ENCODE measurements at regions of chr15 and their contacts with region 1.

Region 1: GRCh38 chr15:100635406-100636071 is 33.1 kb downstream of the ASB7 start:
- DNase-seq: no peak
- ATAC-seq: no peak
- H3K4me3 ChIP-seq: no peak overlapping the region
- H3K27ac ChIP-seq: no peak overlapping the region
- H3K4me1 ChIP-seq: no peaks in the 10 kb centered on the region
- H3K27me3 ChIP-seq: no peaks in the 10 kb centered on the region
- CTCF ChIP-seq: no peak
- POLR2A ChIP-seq: no peak

Region 2: GRCh38 chr15:101000271-101000681 is 364.7 kb after region 1 on chr15:
- intact Hi-C with region 1: loop called (anchors 5 kb)
- DNase-seq: no peak
- ATAC-seq: no peak
- H3K4me3 ChIP-seq: no peak overlapping the region
- H3K27ac ChIP-seq: no peak overlapping the region
- H3K4me1 ChIP-seq: no peaks in the 10 kb centered on the region
- H3K27me3 ChIP-seq: no peaks in the 10 kb centered on the region
- CTCF ChIP-seq: no peak
- POLR2A ChIP-seq: no peak

Region 3: GRCh38 chr15:101407439-101407838 is 771.9 kb after region 1 on chr15:
- intact Hi-C with region 1: no loop called
- DNase-seq: no peak
- ATAC-seq: no peak
- H3K4me3 ChIP-seq: no peak overlapping the region
- H3K27ac ChIP-seq: no peak overlapping the region
- H3K4me1 ChIP-seq: no peaks in the 10 kb centered on the region
- H3K27me3 ChIP-seq: no peaks in the 10 kb centered on the region
- CTCF ChIP-seq: no peak
- POLR2A ChIP-seq: no peak

Measured in body of pancreas (tissue), 4 donors.